ENCODE measurements at regions of chr18 and their contacts with region 1.

Region 1: GRCh38 chr18:5106730-5107129 is 90.3 kb downstream of the AKAIN1 start:
- DNase-seq: peak in 6 of 9 donors; percentile 21 to 56 (median 39)
- ATAC-seq: peak; percentile 57
- H3K4me3 ChIP-seq: no peak overlapping the region
- H3K4me3 Mint-ChIP-seq: peak overlapping the region in 1 of 10 donors; percentile 35
- H3K27ac ChIP-seq: no peak overlapping the region
- H3K27ac Mint-ChIP-seq: peak overlapping the region in 2 of 9 donors; percentile 41 to 45
- H3K4me1 ChIP-seq: no peaks in the 10 kb centered on the region
- H3K4me1 Mint-ChIP-seq: peaks cover 0 to 15% (median 7%) of the 10 kb centered on the region in 7 donors
- H3K27me3 ChIP-seq: no peaks in the 10 kb centered on the region
- H3K27me3 Mint-ChIP-seq: no peaks in the 10 kb centered on the region

Region 2: DNA sequence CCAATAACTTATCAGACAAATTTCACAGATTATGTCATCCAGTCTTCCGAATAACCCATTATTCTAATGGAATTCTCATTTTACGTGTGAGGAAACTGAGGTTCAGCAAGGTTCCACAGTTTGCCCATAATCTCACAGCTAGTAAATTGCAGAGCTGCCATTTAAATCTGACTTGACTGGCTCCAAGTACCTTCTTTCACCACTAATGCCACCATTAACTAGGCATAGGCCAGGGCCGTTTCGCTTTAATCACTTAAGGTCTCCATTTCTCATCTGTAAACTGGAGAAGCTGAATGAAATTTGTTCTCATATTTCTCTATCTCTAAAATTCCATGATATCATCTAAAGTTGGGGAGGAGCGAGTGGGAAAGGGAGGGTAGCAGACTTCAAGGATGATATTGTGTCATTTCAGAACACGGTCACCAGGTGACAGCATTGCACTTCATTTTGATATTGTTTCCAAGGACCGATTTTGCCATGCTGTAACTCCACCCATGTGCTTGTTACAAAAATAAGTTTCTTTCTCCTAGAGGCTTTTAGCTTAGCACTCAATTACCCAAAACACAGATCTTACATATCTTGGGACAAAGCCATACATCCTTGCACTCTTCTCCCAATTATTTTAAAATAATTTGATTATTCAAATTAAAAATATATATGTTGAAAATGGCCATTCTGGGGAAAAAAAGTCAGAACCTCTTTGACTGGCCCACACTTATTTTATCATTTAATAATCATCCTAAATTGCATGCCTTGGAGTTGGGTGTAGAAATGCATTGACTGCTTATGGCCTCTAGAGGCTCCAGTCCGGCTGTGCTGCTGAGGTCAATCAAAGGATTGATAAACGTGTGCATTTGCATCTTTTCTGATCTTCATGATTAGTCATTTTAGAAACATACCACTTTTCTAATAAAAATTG is 33.4 kb before region 1 on chr18:
- CTCF ChIA-PET with region 1: no interaction called
- POLR2A ChIA-PET with region 1: no interaction called
- intact Hi-C with region 1: loop called in 1 of 2 experiments (anchors 1 kb)
- DNase-seq: peak in 7 of 9 donors; percentile 15 to 55 (median 39)
- ATAC-seq: peak; percentile 75
- H3K4me3 ChIP-seq: no peak overlapping the region
- H3K4me3 Mint-ChIP-seq: no peak overlapping the region
- H3K27ac ChIP-seq: no peak overlapping the region
- H3K27ac Mint-ChIP-seq: no peak overlapping the region
- H3K4me1 ChIP-seq: no peaks in the 10 kb centered on the region
- H3K4me1 Mint-ChIP-seq: peaks cover 0 to 7% (median 3%) of the 10 kb centered on the region in 7 donors
- H3K27me3 ChIP-seq: no peaks in the 10 kb centered on the region
- H3K27me3 Mint-ChIP-seq: peaks cover 0 to 4% (median under 1%) of the 10 kb centered on the region in 5 donors

Region 3: GRCh38 chr18:5197032-5197434 is 90.3 kb after region 1 on chr18 and contains the start of gene AKAIN1:
- CTCF ChIA-PET with region 1: no interaction called
- POLR2A ChIA-PET with region 1: no interaction called
- intact Hi-C with region 1: loop called in 1 of 2 experiments (anchors 2 kb)
- DNase-seq: peak in 7 of 9 donors; percentile 2 to 38 (median 25)
- ATAC-seq: peak; percentile 72
- H3K4me3 ChIP-seq: no peak within 1 kb of the TSS
- H3K4me3 Mint-ChIP-seq: peak within 1 kb of the TSS in 9 of 10 donors; percentile 65 to 83 (median 74)
- H3K27ac ChIP-seq: no peak within 1 kb of the TSS
- H3K27ac Mint-ChIP-seq: peak within 1 kb of the TSS in 1 of 9 donors; percentile 46
- H3K4me1 ChIP-seq: peaks cover 0 to 6% of the 10 kb centered on the region in 2 donors
- H3K4me1 Mint-ChIP-seq: peaks cover 0 to 26% (median 19%) of the 10 kb centered on the region in 7 donors
- H3K27me3 ChIP-seq: peaks cover 5 to 17% of the 10 kb centered on the region in 2 donors
- H3K27me3 Mint-ChIP-seq: peaks cover 45 to 64% (median 54%) of the 10 kb centered on the region in 5 donors
- total RNA-seq, gene AKAIN1: not detected

Region 4: DNA sequence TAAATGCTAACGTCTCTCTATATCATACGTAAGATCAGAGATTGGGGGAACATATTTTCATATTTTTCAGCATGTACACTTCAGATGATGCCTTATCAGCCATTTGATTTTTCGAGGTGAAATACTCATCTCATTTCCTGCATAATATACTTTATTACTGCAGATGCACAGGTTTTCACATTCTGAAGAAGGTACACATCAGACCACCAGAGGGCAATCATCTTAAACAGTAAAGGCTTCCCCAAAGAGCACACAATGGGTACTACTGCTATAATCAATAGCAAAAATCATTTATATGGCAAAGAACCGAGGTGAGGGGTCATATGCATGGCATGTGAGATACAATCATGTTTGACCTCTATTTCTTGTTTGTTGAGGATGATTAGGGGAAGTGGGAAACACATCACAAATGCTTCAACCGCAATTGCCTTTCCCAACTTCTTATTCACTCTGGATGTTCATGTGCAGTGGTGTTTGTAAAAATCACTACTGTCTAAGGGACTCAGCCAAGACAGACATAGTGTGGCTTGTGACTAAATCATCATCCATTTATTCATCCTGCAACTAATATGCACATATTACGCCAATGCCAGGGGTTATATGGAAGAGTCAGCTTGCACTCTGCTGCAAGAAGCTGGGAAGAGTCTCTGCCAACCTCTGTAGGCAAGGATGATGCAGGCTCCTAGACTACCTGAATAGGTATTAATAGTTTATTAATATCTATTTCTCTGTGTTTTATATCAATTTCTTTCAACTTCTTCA is 318.4 kb after region 1 on chr18:
- CTCF ChIA-PET with region 1: no interaction called
- POLR2A ChIA-PET with region 1: no interaction called
- intact Hi-C with region 1: loop called in 1 of 2 experiments (anchors 1 kb)
- DNase-seq: peak in 6 of 9 donors; percentile 18 to 45 (median 34)
- ATAC-seq: peak; percentile 76
- H3K4me3 ChIP-seq: no peak overlapping the region
- H3K4me3 Mint-ChIP-seq: no peak overlapping the region
- H3K27ac ChIP-seq: no peak overlapping the region
- H3K27ac Mint-ChIP-seq: no peak overlapping the region
- H3K4me1 ChIP-seq: no peaks in the 10 kb centered on the region
- H3K4me1 Mint-ChIP-seq: peaks cover 0 to 11% (median 3%) of the 10 kb centered on the region in 7 donors
- H3K27me3 ChIP-seq: no peaks in the 10 kb centered on the region
- H3K27me3 Mint-ChIP-seq: peaks cover 0 to 12% (median 4%) of the 10 kb centered on the region in 5 donors

Region 5: GRCh38 chr18:5546660-5547059 is 439.9 kb after region 1 on chr18:
- CTCF ChIA-PET with region 1: no interaction called
- POLR2A ChIA-PET with region 1: no interaction called
- intact Hi-C with region 1: loop called in 1 of 2 experiments (anchors 10 kb)
- DNase-seq: peak in 3 of 9 donors; percentile 7 to 26 (median 16)
- ATAC-seq: peak; percentile 56
- H3K4me3 ChIP-seq: no peak overlapping the region
- H3K4me3 Mint-ChIP-seq: no peak overlapping the region
- H3K27ac ChIP-seq: no peak overlapping the region
- H3K27ac Mint-ChIP-seq: no peak overlapping the region
- H3K4me1 ChIP-seq: no peaks in the 10 kb centered on the region
- H3K4me1 Mint-ChIP-seq: peaks cover 3 to 15% (median 8%) of the 10 kb centered on the region in 7 donors
- H3K27me3 ChIP-seq: no peaks in the 10 kb centered on the region
- H3K27me3 Mint-ChIP-seq: peaks cover 34 to 50% (median 43%) of the 10 kb centered on the region in 5 donors

Region 6: DNA sequence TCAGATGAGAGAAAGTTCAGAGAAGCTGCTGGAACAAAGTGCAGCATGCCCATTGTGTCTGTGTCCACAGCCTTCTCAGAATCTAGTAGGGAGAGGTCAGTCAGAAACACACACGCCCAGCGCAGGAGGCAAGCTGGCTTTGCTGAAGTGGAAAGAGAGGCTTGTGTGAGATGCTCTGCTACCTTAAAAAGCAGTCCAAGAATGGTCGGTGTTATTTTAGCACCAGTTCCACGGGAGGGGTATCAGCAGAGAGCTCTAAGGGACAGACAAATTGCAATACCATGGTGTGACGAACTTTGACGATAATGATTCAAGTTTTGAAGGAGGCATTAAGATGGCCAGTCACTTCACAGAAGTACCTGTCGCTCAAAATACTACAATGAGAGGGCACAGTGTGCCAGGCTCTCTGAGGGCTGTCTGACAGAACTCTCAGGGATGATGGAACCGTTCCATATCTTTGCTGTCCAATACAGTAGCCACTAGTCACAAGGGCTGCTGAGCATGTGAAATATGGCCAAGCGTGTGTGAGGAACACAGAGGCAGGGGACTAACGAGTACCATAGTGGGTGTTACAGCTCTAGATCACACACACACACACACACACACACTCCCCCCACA is 1026.1 kb after region 1 on chr18:
- CTCF ChIA-PET with region 1: no interaction called
- POLR2A ChIA-PET with region 1: no interaction called
- intact Hi-C with region 1: no loop called
- DNase-seq: no peak
- ATAC-seq: no peak
- H3K4me3 ChIP-seq: no peak overlapping the region
- H3K4me3 Mint-ChIP-seq: no peak overlapping the region
- H3K27ac ChIP-seq: no peak overlapping the region
- H3K27ac Mint-ChIP-seq: no peak overlapping the region
- H3K4me1 ChIP-seq: no peaks in the 10 kb centered on the region
- H3K4me1 Mint-ChIP-seq: peaks cover 0 to 6% (median 0%) of the 10 kb centered on the region in 7 donors
- H3K27me3 ChIP-seq: no peaks in the 10 kb centered on the region
- H3K27me3 Mint-ChIP-seq: no peaks in the 10 kb centered on the region